Lower leg skin (tissue), 4 donors: ENCODE measurements at regions of chr12 and their contacts with region 1.

Region 1: GRCh38 chr12:29830391-29830790 is 46.6 kb upstream of the TMTC1 start:
- DNase-seq: no peak
- H3K4me3 ChIP-seq: no peak overlapping the region
- CTCF ChIP-seq: no peak
- POLR2A ChIP-seq: no peak

Region 2: DNA sequence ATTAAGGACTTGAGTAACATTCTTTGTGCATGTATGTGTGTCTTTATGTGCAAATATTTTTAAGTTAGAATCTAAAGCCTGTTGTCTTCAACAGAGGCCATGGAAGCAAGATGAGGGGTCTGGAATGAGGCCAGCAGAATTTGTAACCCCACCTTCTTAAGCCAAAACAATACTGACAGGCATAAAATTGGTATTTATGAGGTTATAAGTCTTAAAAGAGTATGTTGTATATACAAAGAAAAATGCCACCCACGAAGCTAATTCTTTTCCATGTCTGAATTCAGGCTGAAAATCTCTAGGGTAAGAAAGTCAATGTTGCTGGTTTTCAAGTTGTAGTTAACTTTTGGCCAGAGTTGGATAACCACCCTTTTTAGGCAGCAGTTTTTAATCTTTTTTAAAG is 39.6 kb after region 1 on chr12:
- intact Hi-C with region 1: loop called (anchors 1 kb)
- DNase-seq: no peak
- H3K4me3 ChIP-seq: no peak overlapping the region
- CTCF ChIP-seq: no peak
- POLR2A ChIP-seq: no peak